CD4-positive, alpha-beta memory T cell (primary cell): ENCODE measurements at regions of chr5 and their contacts with region 1.

Region 1: GRCh38 chr5:160418561-160419457 is at the start of gene SLU7:
- DNase-seq: peak; percentile 91 to 92 (median 92)
- H3K4me3 ChIP-seq: peak within 1 kb of the TSS; percentile 80 to 85
- H3K4me3 Mint-ChIP-seq: peak within 1 kb of the TSS; percentile 93 to 100 (median 96)
- H3K27ac ChIP-seq: peak within 1 kb of the TSS; percentile 98
- H3K27ac Mint-ChIP-seq: peak within 1 kb of the TSS; percentile 96 to 99 (median 98)
- H3K4me1 ChIP-seq: peaks cover 61% of the 10 kb centered on the region
- H3K4me1 Mint-ChIP-seq: peaks cover 46 to 84% (median 61%) of the 10 kb centered on the region in 4 donors
- H3K27me3 ChIP-seq: no peaks in the 10 kb centered on the region
- H3K27me3 Mint-ChIP-seq: no peaks in the 10 kb centered on the region
- total RNA-seq, gene SLU7: 86.8 to 93.9 TPM

Region 2: DNA sequence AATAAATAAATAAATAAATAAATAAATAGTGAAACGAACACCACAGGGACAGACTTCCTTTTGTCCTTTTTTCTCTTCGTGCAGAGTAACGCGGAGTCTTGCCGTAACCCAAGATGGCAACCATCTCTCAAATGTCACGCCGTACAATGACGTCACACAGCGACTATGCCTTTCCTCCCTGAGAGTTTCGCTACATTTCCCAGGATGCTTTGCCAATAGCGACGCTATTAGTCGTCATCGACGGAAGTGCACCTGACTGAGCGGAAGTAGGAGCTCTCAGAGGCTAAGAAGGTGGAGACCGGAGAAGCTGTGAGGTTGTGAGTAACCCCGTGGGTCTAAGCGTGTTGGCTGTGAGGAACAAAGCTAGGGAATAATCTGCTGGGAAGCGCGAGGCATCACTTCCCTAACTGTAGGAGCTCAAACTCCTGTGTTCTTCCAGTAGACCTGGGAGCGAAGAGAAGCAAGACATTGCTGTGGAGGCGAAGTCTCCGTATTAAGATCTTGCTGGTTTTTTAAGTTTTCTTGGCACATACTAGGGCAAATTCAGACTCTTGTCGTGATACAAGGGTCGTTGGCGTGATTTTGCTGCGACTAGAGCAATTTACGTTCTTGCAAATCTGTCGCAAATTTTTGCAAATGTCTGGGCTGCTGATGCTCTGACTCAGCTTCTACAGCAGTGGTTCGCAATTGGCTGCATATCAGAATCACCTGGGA is 409.8 kb before region 1 on chr5 and contains the start of gene TTC1:
- CTCF ChIA-PET with region 1: no interaction called
- POLR2A ChIA-PET with region 1: interaction called, 8 read pairs
- intact Hi-C with region 1: loop called (anchors 1 kb)
- DNase-seq: peak; percentile 89 to 96 (median 94)
- H3K4me3 ChIP-seq: peak within 1 kb of the TSS; percentile 85 to 96
- H3K4me3 Mint-ChIP-seq: peak within 1 kb of the TSS; percentile 94 to 100 (median 96)
- H3K27ac ChIP-seq: peak within 1 kb of the TSS; percentile 76
- H3K27ac Mint-ChIP-seq: peak within 1 kb of the TSS; percentile 88 to 99 (median 98)
- H3K4me1 ChIP-seq: peaks cover 30% of the 10 kb centered on the region
- H3K4me1 Mint-ChIP-seq: peaks cover 24 to 35% (median 29%) of the 10 kb centered on the region in 4 donors
- H3K27me3 ChIP-seq: no peaks in the 10 kb centered on the region
- H3K27me3 Mint-ChIP-seq: no peaks in the 10 kb centered on the region
- total RNA-seq, gene TTC1: 47.5 to 47.9 TPM

Region 3: GRCh38 chr5:160119142-160119904 is 299.5 kb before region 1 on chr5 and contains the start of gene PWWP2A:
- CTCF ChIA-PET with region 1: no interaction called
- POLR2A ChIA-PET with region 1: interaction called, 5 read pairs
- intact Hi-C with region 1: loop called (anchors 2 kb)
- DNase-seq: peak; percentile 97 to 100 (median 99)
- H3K4me3 ChIP-seq: peak within 1 kb of the TSS; percentile 69 to 82
- H3K4me3 Mint-ChIP-seq: peak within 1 kb of the TSS; percentile 89 to 98 (median 92)
- H3K27ac ChIP-seq: peak within 1 kb of the TSS; percentile 87
- H3K27ac Mint-ChIP-seq: peak within 1 kb of the TSS; percentile 86 to 98 (median 91)
- H3K4me1 ChIP-seq: peaks cover 14% of the 10 kb centered on the region
- H3K4me1 Mint-ChIP-seq: peaks cover 12 to 23% (median 16%) of the 10 kb centered on the region in 4 donors
- H3K27me3 ChIP-seq: no peaks in the 10 kb centered on the region
- H3K27me3 Mint-ChIP-seq: peaks cover 0 to 4% of the 10 kb centered on the region in 2 donors
- total RNA-seq, gene PWWP2A: 38.7 to 40.6 TPM

Region 4: DNA sequence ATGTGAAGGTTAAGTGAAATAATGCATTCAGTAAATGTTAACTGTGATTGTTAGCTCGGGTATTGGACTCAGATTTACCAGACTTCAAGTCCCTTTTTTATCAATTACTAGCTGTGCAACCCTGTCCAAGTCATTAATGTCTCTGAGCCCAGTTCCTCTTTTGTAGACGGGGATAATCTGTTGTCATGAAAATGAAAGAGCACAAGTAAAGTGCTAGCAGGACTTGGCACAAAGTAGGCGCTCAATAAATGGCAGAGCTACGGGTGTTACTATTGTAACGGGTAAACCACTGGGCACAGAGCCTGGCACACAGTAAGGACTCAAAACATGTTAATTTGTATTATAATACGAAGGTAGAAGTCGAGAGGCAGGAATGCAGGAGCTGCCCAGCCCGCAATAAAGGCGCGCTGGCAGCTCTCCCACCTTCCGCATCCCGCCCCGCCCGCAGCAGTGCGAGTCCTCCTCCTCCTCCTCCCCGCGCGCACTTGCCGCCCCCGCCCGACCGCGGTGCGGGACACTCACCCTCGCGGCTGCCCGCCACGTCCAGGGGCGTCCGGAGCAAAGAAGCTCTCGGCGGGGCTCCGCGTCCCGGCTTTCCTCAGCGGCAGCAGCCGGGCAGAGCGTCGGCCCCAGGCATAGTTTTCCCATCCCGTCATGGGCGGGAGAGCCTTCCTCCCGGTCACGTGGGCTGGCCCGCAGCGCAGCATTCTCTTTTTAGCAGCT is 48.7 kb before region 1 on chr5 and contains the start of gene C1QTNF2:
- CTCF ChIA-PET with region 1: no interaction called
- POLR2A ChIA-PET with region 1: no interaction called
- intact Hi-C with region 1: no loop called
- DNase-seq: no peak
- H3K4me3 ChIP-seq: no peak within 1 kb of the TSS
- H3K4me3 Mint-ChIP-seq: peak within 1 kb of the TSS; percentile 57 to 81 (median 67)
- H3K27ac ChIP-seq: no peak within 1 kb of the TSS
- H3K27ac Mint-ChIP-seq: no peak within 1 kb of the TSS
- H3K4me1 ChIP-seq: peaks cover 6% of the 10 kb centered on the region
- H3K4me1 Mint-ChIP-seq: peaks cover 11 to 16% (median 15%) of the 10 kb centered on the region in 4 donors
- H3K27me3 ChIP-seq: peaks cover 17% of the 10 kb centered on the region
- H3K27me3 Mint-ChIP-seq: peaks cover 57 to 62% of the 10 kb centered on the region in 2 donors
- total RNA-seq, gene C1QTNF2: not detected

Region 5: DNA sequence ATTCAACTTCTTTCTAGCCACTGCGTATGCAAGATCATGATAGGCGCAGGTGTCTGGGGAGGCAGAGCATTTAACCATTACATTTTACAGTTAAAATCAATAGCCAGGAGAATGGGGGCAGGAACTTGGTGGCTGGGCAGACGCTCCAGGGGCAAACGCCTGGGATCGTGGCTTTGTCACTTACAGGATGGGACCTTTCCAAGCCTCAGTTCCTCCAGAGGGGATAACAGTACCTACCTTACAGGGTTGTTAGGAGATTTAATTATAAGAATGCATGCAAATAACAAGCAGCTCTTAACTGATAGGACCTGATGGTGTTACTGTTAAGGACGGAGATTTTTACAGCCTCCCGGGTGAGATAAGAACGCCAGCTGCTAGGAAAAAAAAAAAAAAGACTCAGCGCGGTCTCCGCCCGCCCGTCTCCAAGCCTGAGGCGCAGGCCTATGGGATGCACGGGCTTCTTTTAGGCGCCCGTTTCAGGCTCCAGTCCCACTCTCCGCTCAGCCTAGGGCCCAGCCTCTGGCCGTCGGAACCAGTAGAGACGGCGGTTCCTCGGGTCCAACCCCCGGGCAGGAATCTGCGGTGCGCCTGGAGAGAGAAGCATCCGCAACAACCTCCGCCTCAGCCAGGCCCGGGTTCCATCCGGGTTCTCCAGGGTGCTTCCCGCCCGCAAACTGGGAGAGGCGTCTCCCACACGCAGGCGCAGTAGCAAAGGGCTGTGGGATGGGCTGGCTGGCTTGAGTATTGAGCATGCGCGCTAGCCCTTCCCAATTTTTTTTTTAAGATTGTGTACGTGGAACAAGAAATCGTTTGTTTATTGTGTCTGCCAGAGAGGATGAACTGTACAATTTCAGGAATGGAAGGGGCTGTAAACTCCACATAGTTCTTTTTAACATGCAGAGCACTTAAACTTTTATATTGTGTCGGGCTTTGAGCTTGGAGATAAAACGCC is 19.1 kb before region 1 on chr5 and contains the start of gene FAM200C:
- CTCF ChIA-PET with region 1: interaction called, 7 read pairs
- POLR2A ChIA-PET with region 1: interaction called, 4 read pairs
- intact Hi-C with region 1: loop called (anchors 2 kb)
- DNase-seq: peak; percentile 58 to 65 (median 63)
- H3K4me3 ChIP-seq: peak within 1 kb of the TSS; percentile 67 to 71
- H3K4me3 Mint-ChIP-seq: peak within 1 kb of the TSS; percentile 90 to 97 (median 93)
- H3K27ac ChIP-seq: peak within 1 kb of the TSS; percentile 54
- H3K27ac Mint-ChIP-seq: peak within 1 kb of the TSS; percentile 65 to 95 (median 83)
- H3K4me1 ChIP-seq: peaks cover 11% of the 10 kb centered on the region
- H3K4me1 Mint-ChIP-seq: peaks cover 12 to 19% (median 17%) of the 10 kb centered on the region in 4 donors
- H3K27me3 ChIP-seq: no peaks in the 10 kb centered on the region
- H3K27me3 Mint-ChIP-seq: no peaks in the 10 kb centered on the region
- total RNA-seq, gene FAM200C: 0.84 to 1.1 TPM

Region 6: DNA sequence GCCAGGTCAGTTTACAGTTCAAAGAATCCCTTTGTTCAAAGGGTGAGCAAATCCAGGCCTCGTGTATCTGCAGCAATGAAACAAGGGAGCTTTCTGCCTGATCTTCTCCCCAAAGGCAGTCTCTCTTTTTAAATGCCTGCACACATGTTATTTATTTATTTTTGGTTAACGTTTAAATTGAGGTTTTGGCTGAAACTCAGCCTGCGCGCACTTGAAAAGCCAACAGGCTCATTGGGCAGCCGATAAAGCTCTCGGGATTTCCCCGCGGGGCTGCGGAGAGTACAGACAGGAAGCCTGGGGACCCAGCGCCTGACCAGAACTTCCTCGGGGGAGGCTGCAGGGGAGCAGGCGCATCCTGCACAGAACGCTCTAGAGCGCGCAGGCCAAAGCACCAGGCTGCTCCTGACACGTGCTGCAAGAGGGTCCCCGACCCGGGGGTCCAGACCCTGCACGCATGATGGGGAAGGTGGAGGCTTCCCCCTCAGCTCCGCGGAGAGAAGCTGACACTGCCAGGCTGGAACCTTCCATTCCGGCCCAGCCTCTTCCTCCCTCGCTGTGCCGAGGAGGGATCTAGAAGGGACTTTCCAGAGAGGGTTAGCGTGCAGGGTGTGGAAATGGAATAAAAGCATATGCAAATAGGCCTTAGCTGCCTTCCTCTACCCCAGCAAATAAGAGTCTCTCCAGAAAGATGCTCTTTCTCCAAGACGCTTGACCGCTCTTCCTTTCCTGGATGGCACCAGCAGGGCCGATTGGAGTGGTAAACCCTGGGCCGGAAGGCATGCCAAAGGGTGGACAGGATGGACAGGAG is 49.0 kb after region 1 on chr5:
- CTCF ChIA-PET with region 1: interaction called, 7 read pairs
- POLR2A ChIA-PET with region 1: interaction called, 25 read pairs
- intact Hi-C with region 1: loop called (anchors 5 kb)
- DNase-seq: peak; percentile 70 to 90 (median 77)
- H3K4me3 ChIP-seq: peak overlapping the region; percentile 73 to 75
- H3K4me3 Mint-ChIP-seq: peak overlapping the region; percentile 90 to 99 (median 96)
- H3K27ac ChIP-seq: peak overlapping the region; percentile 70
- H3K27ac Mint-ChIP-seq: peak overlapping the region; percentile 90 to 98 (median 97)
- H3K4me1 ChIP-seq: peaks cover 59% of the 10 kb centered on the region
- H3K4me1 Mint-ChIP-seq: peaks cover 43 to 84% (median 62%) of the 10 kb centered on the region in 4 donors
- H3K27me3 ChIP-seq: no peaks in the 10 kb centered on the region
- H3K27me3 Mint-ChIP-seq: no peaks in the 10 kb centered on the region

Region 7: GRCh38 chr5:160508780-160509361 is 90.1 kb after region 1 on chr5:
- CTCF ChIA-PET with region 1: interaction called, 3 read pairs
- POLR2A ChIA-PET with region 1: interaction called, 4 read pairs
- intact Hi-C with region 1: loop called (anchors 5 kb)
- DNase-seq: peak; percentile 76 to 83 (median 79)
- H3K4me3 ChIP-seq: no peak overlapping the region
- H3K4me3 Mint-ChIP-seq: peak overlapping the region in 3 of 8 donors; percentile 20 to 51 (median 40)
- H3K27ac ChIP-seq: no peak overlapping the region
- H3K27ac Mint-ChIP-seq: peak overlapping the region; percentile 2 to 89 (median 76)
- H3K4me1 ChIP-seq: peaks cover 35% of the 10 kb centered on the region
- H3K4me1 Mint-ChIP-seq: peaks cover 25 to 35% (median 26%) of the 10 kb centered on the region in 4 donors
- H3K27me3 ChIP-seq: no peaks in the 10 kb centered on the region
- H3K27me3 Mint-ChIP-seq: no peaks in the 10 kb centered on the region